Activated CD4-positive, alpha-beta memory T cell treated with anti-CD3 and anti-CD28 coated beads for 36 hours (primary cell): ENCODE measurements at regions of chr5 and their contacts with region 1.

Region 1: GRCh38 chr5:139474890-139475791 is 4.3 kb downstream of the SMIM33 start:
- DNase-seq: peak; percentile 55
- H3K4me3 Mint-ChIP-seq: peak overlapping the region; percentile 20
- H3K27ac Mint-ChIP-seq: peak overlapping the region; percentile 93
- H3K4me1 Mint-ChIP-seq: peaks cover 89% of the 10 kb centered on the region
- H3K27me3 Mint-ChIP-seq: no peaks in the 10 kb centered on the region

Region 2: GRCh38 chr5:139368613-139369012 is 106.5 kb before region 1 on chr5:
- CTCF ChIA-PET with region 1: no interaction called
- POLR2A ChIA-PET with region 1: no interaction called
- intact Hi-C with region 1: no loop called
- DNase-seq: no peak
- H3K4me3 Mint-ChIP-seq: no peak overlapping the region
- H3K27ac Mint-ChIP-seq: no peak overlapping the region
- H3K4me1 Mint-ChIP-seq: peaks cover 18% of the 10 kb centered on the region
- H3K27me3 Mint-ChIP-seq: no peaks in the 10 kb centered on the region

Region 3: GRCh38 chr5:139458580-139459406 is 16.3 kb before region 1 on chr5:
- CTCF ChIA-PET with region 1: interaction called, 5 read pairs
- POLR2A ChIA-PET with region 1: interaction called, 24 read pairs
- intact Hi-C with region 1: loop called (anchors 2 kb)
- DNase-seq: peak; percentile 90
- H3K4me3 Mint-ChIP-seq: peak overlapping the region; percentile 56
- H3K27ac Mint-ChIP-seq: peak overlapping the region; percentile 97
- H3K4me1 Mint-ChIP-seq: peaks cover 65% of the 10 kb centered on the region
- H3K27me3 Mint-ChIP-seq: no peaks in the 10 kb centered on the region